CD8-positive, alpha-beta T cell (primary cell): ENCODE measurements at regions of chr5 and their contacts with region 1.

Region 1: GRCh38 chr5:171907725-171908343 is 98.6 kb downstream of the FBXW11 start:
- DNase-seq: peak; percentile 11 to 69 (median 41)
- ATAC-seq: peak; percentile 71
- H3K4me3 ChIP-seq: no peak overlapping the region
- H3K4me3 Mint-ChIP-seq: no peak overlapping the region
- H3K27ac ChIP-seq: no peak overlapping the region
- H3K27ac Mint-ChIP-seq: no peak overlapping the region
- H3K4me1 ChIP-seq: no peaks in the 10 kb centered on the region
- H3K4me1 Mint-ChIP-seq: peaks cover 41% of the 10 kb centered on the region
- H3K27me3 ChIP-seq: no peaks in the 10 kb centered on the region
- H3K27me3 Mint-ChIP-seq: no peaks in the 10 kb centered on the region
- CTCF ChIP-seq: peak; percentile 86

Region 2: DNA sequence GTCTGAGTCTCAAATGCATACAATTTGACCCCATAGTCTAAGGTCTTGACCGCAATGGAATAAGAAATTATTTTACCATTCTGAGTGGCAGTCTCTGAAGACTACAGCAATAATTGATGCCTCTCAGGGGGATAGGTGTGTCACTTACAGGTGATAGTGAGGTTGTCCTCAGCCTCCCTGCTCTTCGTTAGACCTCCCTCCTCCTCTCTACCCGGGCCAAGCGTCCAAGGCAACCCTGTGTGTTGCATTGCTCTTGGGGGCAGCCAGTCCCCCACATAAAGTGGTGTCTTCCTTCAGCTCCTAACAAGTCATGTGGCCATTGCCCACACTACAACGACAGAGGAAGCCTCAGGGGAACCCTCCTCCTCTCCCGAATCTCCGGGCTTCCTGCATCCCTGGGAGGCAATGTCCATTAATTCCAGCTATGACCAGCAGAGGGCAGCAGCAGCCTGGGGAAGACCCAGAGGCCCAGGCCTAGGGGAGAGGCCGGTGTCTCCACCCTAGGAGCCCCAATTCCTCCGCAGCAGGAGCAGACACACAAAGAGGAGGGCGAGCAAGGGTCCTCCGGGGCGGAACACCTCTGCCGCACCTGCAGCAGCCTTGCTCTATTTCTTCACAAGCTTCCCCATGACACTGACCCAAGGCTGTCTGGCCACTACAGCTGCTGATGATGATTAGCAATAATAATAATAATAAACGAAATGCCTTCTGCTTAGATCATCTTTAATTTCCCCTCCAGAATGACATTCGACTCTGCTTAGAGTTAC is 1269.2 kb before region 1 on chr5:
- CTCF ChIA-PET with region 1: no interaction called
- POLR2A ChIA-PET with region 1: no interaction called
- intact Hi-C with region 1: loop called in 1 of 2 experiments (anchors 2 kb)
- DNase-seq: peak; percentile 15 to 70 (median 49)
- ATAC-seq: no peak
- H3K4me3 ChIP-seq: no peak overlapping the region
- H3K4me3 Mint-ChIP-seq: no peak overlapping the region
- H3K27ac ChIP-seq: no peak overlapping the region
- H3K27ac Mint-ChIP-seq: no peak overlapping the region
- H3K4me1 ChIP-seq: peaks cover 11% of the 10 kb centered on the region
- H3K4me1 Mint-ChIP-seq: peaks cover 10% of the 10 kb centered on the region
- H3K27me3 ChIP-seq: no peaks in the 10 kb centered on the region
- H3K27me3 Mint-ChIP-seq: peaks cover 25% of the 10 kb centered on the region
- CTCF ChIP-seq: peak; percentile 65

Region 3: DNA sequence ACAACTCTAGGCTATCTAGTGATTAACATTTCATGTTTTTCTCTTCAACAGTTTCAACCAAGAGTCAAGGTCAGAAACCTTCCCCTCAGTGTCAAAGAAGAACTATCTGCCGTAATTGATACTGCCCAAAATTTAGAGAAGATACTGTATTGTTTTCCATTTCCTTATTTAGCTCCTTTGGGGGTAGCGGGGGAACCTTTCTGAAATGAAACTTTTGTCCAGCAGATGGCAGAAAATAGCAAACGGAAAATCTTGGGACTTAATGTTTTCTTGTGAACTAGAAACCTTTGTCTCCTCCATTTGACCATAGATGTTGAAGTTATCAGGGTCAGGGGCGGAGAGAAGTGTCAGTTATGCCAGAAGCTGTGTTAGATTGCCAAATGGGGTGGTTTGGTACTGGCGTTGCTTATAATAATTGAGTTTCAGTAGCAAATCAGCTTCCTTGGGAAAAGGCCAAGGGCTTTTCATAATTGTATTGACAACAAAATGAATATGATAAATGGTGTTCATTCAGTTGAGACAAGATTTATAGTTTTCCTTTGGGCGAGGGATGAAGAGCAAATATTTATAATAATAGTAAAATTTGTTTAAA is 700.5 kb before region 1 on chr5:
- CTCF ChIA-PET with region 1: no interaction called
- POLR2A ChIA-PET with region 1: no interaction called
- intact Hi-C with region 1: loop called (anchors 2 to 10 kb)
- DNase-seq: peak in 5 of 9 experiments; percentile 1 to 59 (median 17)
- ATAC-seq: no peak
- H3K4me3 ChIP-seq: no peak overlapping the region
- H3K4me3 Mint-ChIP-seq: no peak overlapping the region
- H3K27ac ChIP-seq: no peak overlapping the region
- H3K27ac Mint-ChIP-seq: no peak overlapping the region
- H3K4me1 ChIP-seq: no peaks in the 10 kb centered on the region
- H3K4me1 Mint-ChIP-seq: no peaks in the 10 kb centered on the region
- H3K27me3 ChIP-seq: no peaks in the 10 kb centered on the region
- H3K27me3 Mint-ChIP-seq: peaks cover 9% of the 10 kb centered on the region
- CTCF ChIP-seq: peak; percentile 33

Region 4: DNA sequence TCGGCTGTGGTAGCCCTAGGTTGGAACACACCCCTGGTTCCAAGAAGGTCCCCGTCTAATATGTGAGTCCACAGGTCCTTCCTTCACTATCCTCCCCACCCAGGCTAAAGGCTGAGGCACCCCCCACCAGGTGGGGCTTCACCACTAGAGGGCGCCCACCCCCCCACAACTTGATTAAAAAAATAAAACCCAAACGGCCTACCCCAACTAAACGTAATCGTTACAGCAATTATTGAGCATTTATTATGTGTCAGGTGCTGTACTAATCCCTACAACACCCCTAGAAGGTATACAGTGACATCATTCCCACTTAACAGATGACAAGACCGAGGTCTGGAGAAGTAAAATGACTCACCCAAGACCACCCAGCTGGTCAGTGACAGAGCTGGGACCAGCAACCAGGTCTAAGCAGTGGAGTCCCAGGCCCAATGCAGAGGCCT is 423.4 kb before region 1 on chr5:
- CTCF ChIA-PET with region 1: interaction called, 22 read pairs
- POLR2A ChIA-PET with region 1: no interaction called
- intact Hi-C with region 1: loop called in 1 of 2 experiments (anchors 2 kb)
- DNase-seq: peak; percentile 22 to 65 (median 44)
- ATAC-seq: no peak
- H3K4me3 ChIP-seq: no peak overlapping the region
- H3K4me3 Mint-ChIP-seq: no peak overlapping the region
- H3K27ac ChIP-seq: no peak overlapping the region
- H3K27ac Mint-ChIP-seq: no peak overlapping the region
- H3K4me1 ChIP-seq: peaks cover 5% of the 10 kb centered on the region
- H3K4me1 Mint-ChIP-seq: peaks cover 5% of the 10 kb centered on the region
- H3K27me3 ChIP-seq: no peaks in the 10 kb centered on the region
- H3K27me3 Mint-ChIP-seq: peaks cover 14% of the 10 kb centered on the region
- CTCF ChIP-seq: peak; percentile 74

Region 5: GRCh38 chr5:171521219-171521633 is 386.6 kb before region 1 on chr5:
- CTCF ChIA-PET with region 1: no interaction called
- POLR2A ChIA-PET with region 1: no interaction called
- intact Hi-C with region 1: no loop called
- DNase-seq: no peak
- ATAC-seq: no peak
- H3K4me3 ChIP-seq: no peak overlapping the region
- H3K4me3 Mint-ChIP-seq: no peak overlapping the region
- H3K27ac ChIP-seq: no peak overlapping the region
- H3K27ac Mint-ChIP-seq: no peak overlapping the region
- H3K4me1 ChIP-seq: no peaks in the 10 kb centered on the region
- H3K4me1 Mint-ChIP-seq: no peaks in the 10 kb centered on the region
- H3K27me3 ChIP-seq: no peaks in the 10 kb centered on the region
- H3K27me3 Mint-ChIP-seq: peaks cover 2% of the 10 kb centered on the region
- CTCF ChIP-seq: no peak

Region 6: DNA sequence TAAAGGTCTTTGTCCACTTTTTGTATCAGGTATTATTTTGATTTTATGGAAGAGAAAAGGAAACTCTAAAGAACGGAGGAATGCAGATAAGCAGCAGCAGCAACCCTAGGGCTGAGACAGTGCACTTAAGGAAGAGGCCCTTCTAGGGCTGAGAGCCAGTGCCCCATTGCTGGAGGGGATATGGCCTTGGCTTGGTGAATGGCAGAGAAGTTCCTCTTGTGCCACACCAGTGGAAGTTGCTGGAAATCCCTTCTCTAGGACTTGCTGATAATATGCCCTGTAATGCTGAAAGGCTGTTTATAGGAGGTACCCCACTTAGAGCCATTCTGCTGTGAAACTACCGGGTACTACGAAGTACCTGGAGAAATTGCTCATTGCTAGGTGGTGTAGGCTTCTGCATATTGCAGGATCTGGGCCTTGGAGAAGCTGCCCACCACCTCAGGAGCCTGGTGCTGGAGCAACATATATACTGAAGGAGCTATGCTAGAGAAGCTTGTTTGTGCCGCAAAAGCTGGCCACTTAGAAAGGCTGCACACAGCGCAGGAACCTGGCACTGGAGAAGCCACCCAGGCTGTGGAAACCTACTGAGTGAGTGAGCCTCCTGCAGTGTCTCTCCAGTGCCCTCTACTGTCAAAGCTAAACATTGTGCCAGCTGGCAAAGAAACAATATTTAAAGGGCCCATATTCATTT is 385.4 kb after region 1 on chr5:
- CTCF ChIA-PET with region 1: interaction called, 28 read pairs
- POLR2A ChIA-PET with region 1: no interaction called
- intact Hi-C with region 1: loop called (anchors 1 to 2 kb)
- DNase-seq: peak; percentile 16 to 78 (median 53)
- ATAC-seq: peak; percentile 100
- H3K4me3 ChIP-seq: no peak overlapping the region
- H3K4me3 Mint-ChIP-seq: no peak overlapping the region
- H3K27ac ChIP-seq: no peak overlapping the region
- H3K27ac Mint-ChIP-seq: no peak overlapping the region
- H3K4me1 ChIP-seq: no peaks in the 10 kb centered on the region
- H3K4me1 Mint-ChIP-seq: peaks cover 2% of the 10 kb centered on the region
- H3K27me3 ChIP-seq: no peaks in the 10 kb centered on the region
- H3K27me3 Mint-ChIP-seq: peaks cover 3% of the 10 kb centered on the region
- CTCF ChIP-seq: peak; percentile 82

Region 7: DNA sequence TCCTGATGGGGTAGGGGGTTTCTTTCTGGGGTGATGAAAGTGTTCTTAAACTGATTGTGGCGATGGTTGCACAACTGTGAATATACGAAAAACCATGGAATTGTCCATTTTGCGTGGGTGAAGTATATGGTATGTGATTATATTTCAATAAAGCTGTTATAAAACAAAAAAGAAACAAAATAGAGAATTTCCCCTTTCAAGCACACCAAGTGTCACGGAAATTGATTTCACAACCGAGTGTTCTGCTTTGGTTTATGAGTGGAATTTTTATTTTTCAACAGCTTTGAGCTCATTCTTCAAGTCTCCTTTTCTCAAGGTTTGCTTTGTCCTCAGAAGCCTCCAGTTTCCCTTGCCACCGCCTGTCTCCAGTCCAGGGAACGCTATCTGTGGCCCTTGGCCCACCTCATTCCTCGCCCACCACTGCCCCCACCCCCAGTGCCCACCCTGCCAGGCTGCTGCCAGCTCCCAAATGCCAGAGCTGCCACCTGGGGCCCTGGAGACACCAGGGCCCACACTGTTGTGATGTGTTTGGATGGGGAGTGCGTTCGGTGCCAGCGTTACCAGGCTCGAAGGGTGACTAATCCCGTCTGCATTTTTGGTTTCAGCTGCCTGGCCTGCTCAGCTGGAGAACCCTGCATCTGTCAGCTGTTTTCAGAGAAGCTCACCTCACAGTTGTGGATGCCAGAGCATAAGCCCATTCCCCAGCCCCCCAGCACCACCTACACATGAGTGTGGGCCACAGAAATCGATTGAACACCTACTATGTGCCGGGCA is 832.8 kb after region 1 on chr5:
- CTCF ChIA-PET with region 1: no interaction called
- POLR2A ChIA-PET with region 1: no interaction called
- intact Hi-C with region 1: no loop called
- DNase-seq: no peak
- ATAC-seq: no peak
- H3K4me3 ChIP-seq: no peak overlapping the region
- H3K4me3 Mint-ChIP-seq: no peak overlapping the region
- H3K27ac ChIP-seq: no peak overlapping the region
- H3K27ac Mint-ChIP-seq: no peak overlapping the region
- H3K4me1 ChIP-seq: no peaks in the 10 kb centered on the region
- H3K4me1 Mint-ChIP-seq: peaks cover 7% of the 10 kb centered on the region
- H3K27me3 ChIP-seq: no peaks in the 10 kb centered on the region
- H3K27me3 Mint-ChIP-seq: no peaks in the 10 kb centered on the region
- CTCF ChIP-seq: no peak